Activated CD4-positive, alpha-beta memory T cell treated with anti-CD3 and anti-CD28 coated beads, Interleukin-2, amount 10 ng/mL, durations not matched to agents 7 days and 5 days (primary cell): ENCODE measurements at regions of chr9 and their contacts with region 1.

Region 1: GRCh38 chr9:121322037-121322775 is 47.8 kb downstream of the STOM start:
- DNase-seq: no peak
- H3K4me3 Mint-ChIP-seq: no peak overlapping the region
- H3K27ac Mint-ChIP-seq: no peak overlapping the region
- H3K4me1 Mint-ChIP-seq: peaks cover 36% of the 10 kb centered on the region
- H3K27me3 Mint-ChIP-seq: no peaks in the 10 kb centered on the region

Region 2: GRCh38 chr9:121278535-121279261 is 43.5 kb before region 1 on chr9:
- CTCF ChIA-PET with region 1: interaction called, 18 read pairs
- POLR2A ChIA-PET with region 1: no interaction called
- DNase-seq: peak; percentile 50
- H3K4me3 Mint-ChIP-seq: no peak overlapping the region
- H3K27ac Mint-ChIP-seq: no peak overlapping the region
- H3K4me1 Mint-ChIP-seq: peaks cover 5% of the 10 kb centered on the region
- H3K27me3 Mint-ChIP-seq: no peaks in the 10 kb centered on the region

Region 3: DNA sequence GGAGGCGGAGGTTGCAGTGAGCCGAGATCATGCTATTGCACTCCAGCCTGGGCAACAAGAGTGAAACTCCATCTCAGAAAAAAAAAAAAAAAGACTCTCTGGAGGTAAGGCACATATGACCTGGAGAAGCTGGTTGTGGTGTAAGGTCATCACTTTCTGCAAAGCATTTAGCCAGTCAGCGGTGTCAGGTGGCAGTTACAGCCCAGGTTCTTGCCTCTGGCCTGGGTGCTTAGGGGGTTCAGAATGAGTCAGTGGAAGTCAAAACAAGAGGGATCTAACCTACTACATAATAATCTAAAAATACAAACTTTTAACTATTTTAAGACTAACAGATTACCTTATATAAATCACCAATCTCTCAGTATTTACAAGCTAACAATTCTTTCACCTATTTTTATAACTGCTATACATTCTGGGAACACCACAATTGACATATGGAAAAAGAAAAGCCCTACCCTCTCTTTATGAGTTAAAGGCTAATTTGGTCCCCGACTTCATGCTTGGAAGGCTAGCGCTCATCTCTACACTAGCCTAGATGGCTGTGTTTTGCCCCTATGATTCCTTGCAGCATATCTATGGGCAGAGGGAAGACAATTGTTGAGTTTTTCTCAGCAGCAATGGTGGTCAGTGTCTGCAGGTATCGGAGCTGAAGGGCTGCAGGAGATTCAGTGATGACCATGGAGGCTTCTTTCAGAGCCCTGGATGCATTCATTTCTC is 18.6 kb after region 1 on chr9:
- CTCF ChIA-PET with region 1: interaction called, 34 read pairs
- POLR2A ChIA-PET with region 1: interaction called, 3 read pairs
- DNase-seq: no peak
- H3K4me3 Mint-ChIP-seq: no peak overlapping the region
- H3K27ac Mint-ChIP-seq: no peak overlapping the region
- H3K4me1 Mint-ChIP-seq: peaks cover 20% of the 10 kb centered on the region
- H3K27me3 Mint-ChIP-seq: no peaks in the 10 kb centered on the region

Region 4: DNA sequence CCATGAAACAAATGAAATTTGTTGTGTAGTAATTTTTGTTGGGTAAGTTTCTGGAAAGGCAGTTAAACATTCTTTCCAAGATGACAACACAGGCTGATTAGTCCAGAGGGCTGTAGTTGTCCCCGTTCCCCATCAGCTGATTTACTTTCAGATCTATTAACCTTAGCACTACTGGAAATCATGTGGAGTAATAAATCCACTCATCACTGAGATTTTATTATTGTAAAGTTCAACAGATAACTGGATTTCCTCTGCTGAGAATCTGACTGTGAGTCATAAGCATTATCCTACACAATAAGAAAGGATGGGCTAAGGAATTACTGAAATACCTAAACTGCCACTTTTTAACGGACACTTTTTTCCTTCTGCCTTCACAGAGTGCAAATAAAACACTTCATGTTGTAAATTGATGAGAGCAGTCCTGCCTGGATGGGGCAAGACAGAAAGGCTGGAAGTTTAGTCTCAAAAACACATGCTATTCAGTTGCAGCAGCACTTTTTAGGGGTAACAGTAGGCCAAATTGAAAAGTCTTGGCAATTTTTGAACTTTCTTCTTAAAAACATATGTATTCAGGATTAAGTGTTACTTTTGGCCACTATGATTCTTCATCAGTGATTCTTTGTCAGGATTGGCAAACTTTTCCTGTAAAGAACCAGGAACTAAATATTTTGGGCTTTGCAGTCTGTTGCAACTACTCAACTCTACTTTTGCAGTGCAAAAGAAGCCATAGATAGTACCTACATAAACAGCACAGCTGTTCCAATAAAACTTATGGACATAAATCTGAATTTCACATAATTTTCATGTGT is 40.8 kb after region 1 on chr9:
- CTCF ChIA-PET with region 1: interaction called, 19 read pairs
- POLR2A ChIA-PET with region 1: interaction called, 3 read pairs
- DNase-seq: no peak
- H3K4me3 Mint-ChIP-seq: no peak overlapping the region
- H3K27ac Mint-ChIP-seq: no peak overlapping the region
- H3K4me1 Mint-ChIP-seq: peaks cover 83% of the 10 kb centered on the region
- H3K27me3 Mint-ChIP-seq: no peaks in the 10 kb centered on the region

Region 5: DNA sequence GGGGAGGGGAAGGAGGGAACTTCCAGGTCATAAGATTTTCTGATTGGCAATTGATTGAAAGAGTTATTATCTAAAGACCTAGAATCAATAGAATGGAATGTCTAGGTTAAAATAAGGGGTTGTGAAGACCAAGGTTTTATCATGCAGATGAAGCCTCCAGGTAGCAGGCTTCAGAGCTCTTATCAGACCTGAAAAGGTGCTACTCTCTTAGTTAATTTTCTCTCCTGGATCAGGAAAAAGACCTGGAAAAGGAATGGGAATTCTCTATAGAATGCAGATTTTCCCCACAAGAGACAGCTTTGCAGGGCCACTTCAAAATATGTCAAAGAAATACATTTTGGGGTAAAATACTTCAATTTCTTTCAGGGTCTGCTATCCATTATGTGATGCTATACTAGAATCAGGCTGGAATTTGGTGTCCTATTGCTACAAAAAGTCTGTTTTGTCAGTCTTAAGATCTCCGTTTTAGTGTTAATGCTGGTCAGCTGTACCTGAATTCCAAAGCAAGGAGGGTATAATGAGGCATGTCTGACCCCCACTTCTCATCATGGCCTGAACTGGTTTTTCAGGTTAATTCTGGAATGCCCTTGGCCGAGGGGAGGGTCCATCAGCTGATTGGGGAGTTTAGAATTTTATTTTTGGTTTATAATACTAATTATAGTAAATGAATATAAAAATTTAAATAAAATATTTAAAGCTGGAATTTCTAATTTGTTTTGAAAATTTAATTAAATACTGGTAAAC is 64.4 kb after region 1 on chr9:
- CTCF ChIA-PET with region 1: interaction called, 189 read pairs
- POLR2A ChIA-PET with region 1: no interaction called
- DNase-seq: no peak
- H3K4me3 Mint-ChIP-seq: no peak overlapping the region
- H3K27ac Mint-ChIP-seq: no peak overlapping the region
- H3K4me1 Mint-ChIP-seq: no peaks in the 10 kb centered on the region
- H3K27me3 Mint-ChIP-seq: peaks cover 12% of the 10 kb centered on the region

Region 6: DNA sequence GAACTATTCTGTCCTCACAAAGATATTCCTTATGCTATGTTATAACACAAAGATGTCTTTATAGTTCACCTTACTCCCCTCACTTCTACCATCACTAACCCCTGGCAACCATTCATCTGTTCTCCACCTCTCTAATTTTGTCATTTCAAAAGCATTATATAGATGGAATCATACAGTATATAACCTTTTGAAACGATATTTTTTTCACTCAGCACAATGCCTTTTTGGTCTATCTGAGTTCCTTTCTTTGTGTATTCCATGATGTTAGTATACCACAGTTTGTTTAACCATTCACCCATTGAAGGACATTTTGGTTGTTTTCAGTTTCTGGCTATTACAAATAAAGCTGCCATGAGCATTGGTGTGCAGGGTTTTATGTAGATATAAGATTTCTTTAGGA is 83.7 kb after region 1 on chr9:
- CTCF ChIA-PET with region 1: interaction called, 286 read pairs
- POLR2A ChIA-PET with region 1: interaction called, 3 read pairs
- DNase-seq: no peak
- H3K4me3 Mint-ChIP-seq: no peak overlapping the region
- H3K27ac Mint-ChIP-seq: no peak overlapping the region
- H3K4me1 Mint-ChIP-seq: no peaks in the 10 kb centered on the region
- H3K27me3 Mint-ChIP-seq: peaks cover 20% of the 10 kb centered on the region

Region 7: DNA sequence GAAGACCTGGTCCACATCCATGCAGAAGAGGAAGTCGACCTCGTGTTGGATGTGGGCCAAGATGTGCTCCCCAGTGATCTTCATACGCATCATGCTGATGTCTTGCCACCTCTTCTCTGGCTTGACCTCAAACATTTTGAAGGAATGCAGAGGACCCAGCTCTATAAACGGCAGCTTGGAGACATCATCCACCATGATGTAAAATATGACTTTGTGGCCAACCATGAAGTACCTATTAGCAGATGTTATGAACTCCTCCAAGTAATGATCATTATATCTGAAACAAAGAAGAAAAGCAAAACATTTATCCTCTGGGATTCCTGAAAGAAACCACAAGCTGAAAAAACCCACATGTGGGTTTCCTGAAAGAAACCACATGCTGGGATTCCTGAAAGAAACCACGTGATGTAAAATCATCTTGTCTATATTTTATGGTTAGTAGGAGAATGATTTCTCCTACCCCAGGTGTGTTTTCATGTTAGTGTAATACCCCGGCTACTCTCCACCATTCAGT is 125.2 kb after region 1 on chr9:
- CTCF ChIA-PET with region 1: no interaction called
- POLR2A ChIA-PET with region 1: no interaction called
- DNase-seq: no peak
- H3K4me3 Mint-ChIP-seq: no peak overlapping the region
- H3K27ac Mint-ChIP-seq: no peak overlapping the region
- H3K4me1 Mint-ChIP-seq: peaks cover 12% of the 10 kb centered on the region
- H3K27me3 Mint-ChIP-seq: peaks cover 46% of the 10 kb centered on the region

Region 8: DNA sequence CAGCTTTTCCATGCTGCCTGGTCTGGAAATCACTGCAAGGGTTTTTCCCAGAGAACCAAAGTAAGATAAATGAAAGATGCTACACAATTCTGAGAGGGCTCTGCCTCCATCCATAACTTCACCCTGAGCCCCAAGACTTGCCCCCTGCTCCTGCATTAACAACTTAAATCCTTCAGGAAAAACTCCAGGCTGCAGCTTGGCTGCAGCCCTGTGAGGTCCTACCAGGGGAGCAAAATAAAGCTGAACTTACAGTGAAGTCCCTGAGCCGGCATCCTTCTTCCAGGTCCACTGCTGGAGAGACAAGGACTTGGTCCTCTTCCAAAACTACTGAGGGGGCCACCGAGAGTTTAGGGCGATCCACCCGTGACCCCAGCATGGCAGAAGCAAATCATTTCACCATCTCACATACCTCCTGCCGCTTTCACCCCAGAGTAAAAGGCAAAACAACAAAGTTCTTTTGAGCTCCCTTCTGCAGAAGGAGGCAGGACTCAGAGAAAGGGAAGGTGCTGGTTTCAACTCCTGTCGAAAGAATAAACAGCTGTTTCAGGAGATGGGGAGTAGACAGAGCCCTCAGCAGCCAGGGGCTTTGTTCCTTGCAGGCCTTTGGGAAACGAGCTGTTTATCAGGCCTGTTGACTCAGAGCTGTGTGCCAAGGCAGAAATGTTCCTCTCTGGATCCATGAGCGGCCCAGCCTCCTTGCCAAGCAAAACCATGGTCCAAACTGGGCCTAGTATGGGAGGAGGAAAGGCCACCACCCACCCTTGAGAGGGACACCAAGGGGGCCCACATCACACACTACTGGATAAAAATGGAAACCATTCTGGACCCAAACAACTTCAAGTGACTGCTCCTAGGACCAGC is 156.8 kb after region 1 on chr9:
- CTCF ChIA-PET with region 1: no interaction called
- POLR2A ChIA-PET with region 1: no interaction called
- DNase-seq: no peak
- H3K4me3 Mint-ChIP-seq: no peak overlapping the region
- H3K27ac Mint-ChIP-seq: no peak overlapping the region
- H3K4me1 Mint-ChIP-seq: no peaks in the 10 kb centered on the region
- H3K27me3 Mint-ChIP-seq: peaks cover 4% of the 10 kb centered on the region